AG04450 (cell line): ENCODE measurements at regions of chr4 and their contacts with region 1.

Region 1: DNA sequence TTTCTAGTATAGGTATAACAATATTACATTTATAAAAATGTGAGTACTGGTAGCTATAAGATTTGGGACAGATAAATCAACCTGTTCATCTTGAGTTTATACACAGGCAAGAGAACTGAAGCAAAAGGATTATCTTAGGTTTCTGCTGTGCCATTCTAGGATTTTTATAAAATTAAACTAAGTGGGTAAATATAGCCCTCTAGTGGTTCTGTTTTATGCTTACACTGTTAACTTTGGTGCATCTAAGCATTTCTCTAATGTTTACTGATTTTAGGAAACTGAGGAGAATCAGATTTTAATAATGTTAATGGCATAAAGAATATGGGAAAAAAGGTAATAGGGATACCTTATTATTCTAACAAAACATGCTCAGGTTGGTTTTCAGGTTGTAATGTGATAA is 1.1 kb upstream of the RRH start:
- DNase-seq: no peak
- H3K4me3 ChIP-seq: no peak overlapping the region
- H3K27ac ChIP-seq: no peak overlapping the region
- H3K27me3 ChIP-seq: no peaks in the 10 kb centered on the region
- CTCF ChIP-seq: peak; percentile 67

Region 2: DNA sequence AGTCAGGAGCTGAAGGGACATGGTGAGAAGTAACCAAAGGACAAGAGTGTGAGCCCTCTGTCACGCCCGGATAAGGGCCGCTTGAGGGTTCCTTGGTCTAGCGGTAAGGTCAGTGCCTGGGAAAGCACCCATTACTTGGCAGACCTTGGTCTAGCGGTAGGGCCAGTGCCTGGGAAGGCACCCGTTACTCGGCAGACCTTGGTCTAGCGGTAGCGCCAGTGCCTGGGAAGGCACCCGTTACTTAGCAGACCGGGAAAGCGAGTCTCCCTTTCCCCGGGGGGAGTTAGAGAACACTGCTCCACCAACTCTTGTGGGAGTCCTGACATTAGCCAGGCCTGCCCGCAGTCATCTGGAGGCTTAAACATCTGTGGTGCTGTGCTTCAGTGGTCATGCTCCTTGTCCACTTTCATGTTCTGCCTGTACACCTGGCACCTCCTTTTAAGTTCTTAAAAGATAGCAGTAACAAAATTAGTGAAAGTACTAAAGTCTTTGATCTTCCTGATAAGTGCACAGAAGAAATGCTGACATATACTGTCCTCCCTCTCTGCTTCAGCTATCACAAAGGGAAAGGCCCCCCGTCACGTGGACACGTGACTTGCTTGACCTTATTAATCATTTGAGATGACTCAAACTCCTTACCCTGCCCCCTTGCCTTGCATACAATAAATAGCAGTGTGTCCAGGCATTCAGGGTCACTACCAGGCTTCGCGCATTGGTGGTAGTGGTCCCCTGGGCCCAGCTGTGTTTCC is 402.5 kb before region 1 on chr4:
- CTCF ChIA-PET with region 1: interaction called, 48 read pairs
- POLR2A ChIA-PET with region 1: no interaction called
- DNase-seq: no peak
- H3K4me3 ChIP-seq: no peak overlapping the region
- H3K27ac ChIP-seq: no peak overlapping the region
- H3K27me3 ChIP-seq: no peaks in the 10 kb centered on the region
- CTCF ChIP-seq: no peak

Region 3: GRCh38 chr4:109702950-109703663 is 123.6 kb before region 1 on chr4 and contains the start of gene CASP6:
- CTCF ChIA-PET with region 1: interaction called, 28 read pairs
- POLR2A ChIA-PET with region 1: no interaction called
- DNase-seq: peak; percentile 21
- H3K4me3 ChIP-seq: peak within 1 kb of the TSS; percentile 86
- H3K27ac ChIP-seq: peak within 1 kb of the TSS; percentile 71
- H3K27me3 ChIP-seq: no peaks in the 10 kb centered on the region
- CTCF ChIP-seq: peak; percentile 71
- polyA plus RNA-seq, gene CASP6: 38.9 and 44.8 TPM in 2 replicates

Region 4: DNA sequence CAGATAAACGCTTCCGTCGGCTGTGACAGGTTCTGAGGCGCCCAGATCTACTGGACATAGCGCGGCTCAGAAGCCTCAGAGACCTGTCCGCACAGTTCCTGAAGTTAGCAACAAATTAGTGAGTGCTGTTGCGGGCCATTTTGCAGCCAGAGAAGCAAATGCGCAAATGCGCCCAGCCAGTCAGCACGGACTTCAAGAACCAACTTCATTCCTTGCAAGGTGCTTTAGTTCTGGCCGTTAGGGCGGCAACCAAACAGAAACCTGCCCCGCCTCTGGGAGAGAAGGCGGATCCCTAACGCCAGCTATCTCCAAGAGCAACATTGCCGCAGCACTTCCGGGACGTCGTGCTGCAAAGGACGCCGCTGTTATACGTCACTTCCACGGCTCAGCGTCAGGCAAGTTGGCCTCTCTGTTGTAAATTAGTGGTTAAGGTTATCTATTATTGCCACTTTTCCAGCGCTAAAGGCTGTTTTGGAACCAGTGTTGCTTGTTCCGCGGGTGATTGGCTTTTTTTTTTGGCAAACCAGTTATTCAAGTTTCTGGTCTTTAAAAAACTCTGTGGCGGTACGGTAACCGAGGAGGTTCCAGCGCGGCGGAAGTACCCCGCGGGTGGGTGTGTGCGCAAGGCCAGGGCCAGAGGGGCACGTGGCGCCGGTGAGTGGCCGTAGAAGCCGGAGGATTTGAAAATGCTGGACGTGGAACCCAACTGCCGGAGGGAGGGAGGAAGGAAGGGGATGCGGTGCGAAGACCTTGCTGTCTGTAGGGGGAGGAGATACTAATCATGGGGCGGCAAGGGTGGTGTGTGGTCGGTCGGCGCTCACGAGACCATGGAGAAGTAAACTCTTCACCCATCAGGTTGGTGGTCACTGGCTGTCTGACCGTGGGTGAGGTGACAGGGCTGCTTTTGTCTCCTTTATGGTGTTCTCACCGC is 11.3 kb before region 1 on chr4 and contains the start of gene GAR1:
- CTCF ChIA-PET with region 1: interaction called, 17 read pairs
- POLR2A ChIA-PET with region 1: no interaction called
- DNase-seq: peak; percentile 77
- H3K4me3 ChIP-seq: peak within 1 kb of the TSS; percentile 96
- H3K27ac ChIP-seq: peak within 1 kb of the TSS; percentile 69
- H3K27me3 ChIP-seq: no peaks in the 10 kb centered on the region
- CTCF ChIP-seq: no peak
- polyA plus RNA-seq, gene GAR1: 18.3 and 23.7 TPM in 2 replicates